ENCODE measurements at regions of chr2 and their contacts with region 1.

Region 1: GRCh38 chr2:39124000-39124745 is 3.3 kb upstream of the SOS1 start:
- DNase-seq: peak; percentile 93
- H3K4me3 Mint-ChIP-seq: peak overlapping the region; percentile 98
- H3K27ac Mint-ChIP-seq: peak overlapping the region; percentile 96
- H3K4me1 Mint-ChIP-seq: peaks cover 27% of the 10 kb centered on the region
- H3K27me3 Mint-ChIP-seq: no peaks in the 10 kb centered on the region
- CTCF ChIP-seq: peak; percentile 35

Region 2: GRCh38 chr2:39033980-39034379 is 90.2 kb before region 1 on chr2:
- CTCF ChIA-PET with region 1: no interaction called
- POLR2A ChIA-PET with region 1: no interaction called
- intact Hi-C with region 1: no loop called
- DNase-seq: peak; percentile 18
- H3K4me3 Mint-ChIP-seq: no peak overlapping the region
- H3K27ac Mint-ChIP-seq: no peak overlapping the region
- H3K4me1 Mint-ChIP-seq: no peaks in the 10 kb centered on the region
- H3K27me3 Mint-ChIP-seq: no peaks in the 10 kb centered on the region
- CTCF ChIP-seq: no peak

Region 3: DNA sequence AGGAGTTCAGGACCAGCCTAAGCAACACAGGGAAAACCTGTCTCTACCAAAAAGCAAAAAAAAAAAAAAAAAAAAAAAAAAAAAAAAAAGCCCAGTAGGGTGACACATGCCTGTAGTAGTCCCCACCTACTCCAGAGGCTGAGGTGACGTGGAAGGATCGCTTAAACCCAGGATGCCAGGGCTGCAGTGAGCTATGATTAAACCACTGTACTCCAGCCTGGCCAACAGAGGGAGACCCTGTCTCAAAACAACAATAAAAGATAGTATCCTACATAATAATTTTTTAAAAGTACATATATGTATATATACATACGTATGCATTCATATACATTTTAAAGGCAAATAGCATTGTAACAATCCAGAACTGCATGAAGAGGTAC is 55.0 kb before region 1 on chr2:
- CTCF ChIA-PET with region 1: interaction called, 4 read pairs
- POLR2A ChIA-PET with region 1: interaction called, 54 read pairs
- intact Hi-C with region 1: loop called (anchors 2 kb)
- DNase-seq: peak; percentile 44
- H3K4me3 Mint-ChIP-seq: no peak overlapping the region
- H3K27ac Mint-ChIP-seq: peak overlapping the region; percentile 70
- H3K4me1 Mint-ChIP-seq: peaks cover 32% of the 10 kb centered on the region
- H3K27me3 Mint-ChIP-seq: no peaks in the 10 kb centered on the region
- CTCF ChIP-seq: no peak

Region 4: GRCh38 chr2:39099870-39100728 is 24.1 kb before region 1 on chr2:
- CTCF ChIA-PET with region 1: interaction called, 11 read pairs
- POLR2A ChIA-PET with region 1: interaction called, 60 read pairs
- intact Hi-C with region 1: no loop called
- DNase-seq: peak; percentile 15
- H3K4me3 Mint-ChIP-seq: no peak overlapping the region
- H3K27ac Mint-ChIP-seq: no peak overlapping the region
- H3K4me1 Mint-ChIP-seq: peaks cover 34% of the 10 kb centered on the region
- H3K27me3 Mint-ChIP-seq: no peaks in the 10 kb centered on the region
- CTCF ChIP-seq: no peak

Region 5: GRCh38 chr2:39141331-39142271 is 17.4 kb after region 1 on chr2:
- CTCF ChIA-PET with region 1: interaction called, 3 read pairs
- POLR2A ChIA-PET with region 1: interaction called, 21 read pairs
- intact Hi-C with region 1: no loop called
- DNase-seq: no peak
- H3K4me3 Mint-ChIP-seq: peak overlapping the region; percentile 35
- H3K27ac Mint-ChIP-seq: peak overlapping the region; percentile 7
- H3K4me1 Mint-ChIP-seq: peaks cover 10% of the 10 kb centered on the region
- H3K27me3 Mint-ChIP-seq: no peaks in the 10 kb centered on the region
- CTCF ChIP-seq: no peak

Region 6: DNA sequence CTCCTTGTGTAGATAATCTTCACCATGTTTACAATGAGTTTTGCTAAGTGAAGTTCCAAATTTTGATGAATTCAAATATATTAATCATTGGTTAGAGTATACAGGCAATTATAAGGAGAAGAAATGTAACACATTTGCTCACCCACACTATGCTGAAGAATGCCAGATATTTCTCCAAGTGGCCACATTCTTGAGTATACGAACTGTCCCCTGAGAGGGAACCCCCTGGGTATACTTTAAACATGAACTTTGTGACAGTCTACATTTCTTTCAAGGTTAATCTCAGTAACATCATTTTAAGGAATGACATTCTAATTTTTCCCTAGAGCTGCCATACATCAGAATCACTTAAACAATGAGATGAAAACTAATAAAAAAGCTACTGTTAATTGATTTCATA is 159.4 kb after region 1 on chr2:
- CTCF ChIA-PET with region 1: no interaction called
- POLR2A ChIA-PET with region 1: no interaction called
- intact Hi-C with region 1: no loop called
- DNase-seq: no peak
- H3K4me3 Mint-ChIP-seq: no peak overlapping the region
- H3K27ac Mint-ChIP-seq: no peak overlapping the region
- H3K4me1 Mint-ChIP-seq: no peaks in the 10 kb centered on the region
- H3K27me3 Mint-ChIP-seq: no peaks in the 10 kb centered on the region
- CTCF ChIP-seq: no peak

Region 7: GRCh38 chr2:39932198-39932597 is 808.0 kb after region 1 on chr2:
- CTCF ChIA-PET with region 1: no interaction called
- POLR2A ChIA-PET with region 1: no interaction called
- intact Hi-C with region 1: no loop called
- DNase-seq: no peak
- H3K4me3 Mint-ChIP-seq: no peak overlapping the region
- H3K27ac Mint-ChIP-seq: no peak overlapping the region
- H3K4me1 Mint-ChIP-seq: no peaks in the 10 kb centered on the region
- H3K27me3 Mint-ChIP-seq: no peaks in the 10 kb centered on the region
- CTCF ChIP-seq: no peak